ENCODE measurements at regions of chr21 and their contacts with region 1.

Region 1: GRCh38 chr21:41816220-41817165 is 49.6 kb upstream of the RIPK4 start:
- DNase-seq: peak in 9 of 10 donors; percentile 30 to 78 (median 62)
- H3K4me3 ChIP-seq: no peak overlapping the region
- H3K27ac ChIP-seq: no peak overlapping the region
- H3K27me3 ChIP-seq: no peaks in the 10 kb centered on the region
- CTCF ChIP-seq: peak; percentile 27 to 87 (median 76)

Region 2: GRCh38 chr21:41283211-41283818 is 533.2 kb before region 1 on chr21:
- intact Hi-C with region 1: loop called in 1 of 2 experiments (anchors 5 kb)
- DNase-seq: peak in 2 of 10 donors; percentile 20 to 46
- H3K4me3 ChIP-seq: no peak overlapping the region
- H3K27ac ChIP-seq: no peak overlapping the region
- H3K27me3 ChIP-seq: peaks cover 0 to 32% (median 0%) of the 10 kb centered on the region in 45 donors
- CTCF ChIP-seq: peak; percentile 43 to 88 (median 72)

Region 3: DNA sequence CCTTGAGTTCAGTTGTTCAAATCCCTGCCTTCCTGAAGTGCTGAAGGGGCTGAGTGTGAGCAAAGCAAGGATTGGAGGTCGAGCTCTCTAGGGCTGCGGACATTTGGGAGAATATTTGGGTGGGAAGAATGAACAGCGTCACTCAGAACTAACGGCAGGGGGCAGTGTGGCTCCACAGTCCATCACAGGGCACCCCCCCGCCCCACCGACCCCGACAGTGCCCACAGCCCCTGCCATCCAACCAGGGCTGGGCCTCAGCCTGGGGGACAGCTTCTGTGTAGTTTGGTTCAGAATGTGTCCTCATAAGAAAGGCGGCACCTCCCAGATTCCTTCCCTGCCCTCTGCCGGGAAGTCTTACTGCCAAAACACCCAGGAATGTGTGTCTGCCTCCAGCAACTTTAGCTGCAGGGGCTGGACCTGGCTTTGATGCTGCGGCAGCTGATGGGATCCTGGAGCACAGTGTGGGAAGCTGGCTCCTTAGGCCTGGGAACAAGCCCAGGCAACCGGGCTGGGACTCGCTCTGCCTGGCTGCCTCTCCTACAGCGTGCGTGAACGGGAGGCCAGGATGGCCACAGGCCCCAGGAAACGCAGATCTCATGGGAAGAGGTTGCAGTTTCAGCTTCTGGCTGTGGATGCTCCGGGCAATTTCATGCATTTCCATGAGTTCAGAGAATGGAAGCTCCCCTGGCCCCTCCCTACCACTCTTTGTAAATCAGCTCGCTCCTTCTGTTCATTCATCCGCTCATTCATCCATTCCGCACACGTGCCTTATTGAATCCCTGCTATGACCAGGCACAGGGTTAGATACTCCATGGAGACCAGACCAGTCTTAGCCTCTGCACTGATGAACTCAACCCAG is 203.6 kb before region 1 on chr21:
- intact Hi-C with region 1: loop called (anchors 1 to 5 kb)
- DNase-seq: peak in 9 of 10 donors; percentile 16 to 69 (median 54)
- H3K4me3 ChIP-seq: peak overlapping the region in 16 of 59 donors; percentile 0 to 39 (median 14)
- H3K27ac ChIP-seq: peak overlapping the region in 21 of 59 donors; percentile 2 to 58 (median 17)
- H3K27me3 ChIP-seq: peaks cover 0 to 9% (median 0%) of the 10 kb centered on the region in 45 donors
- CTCF ChIP-seq: peak; percentile 65 to 94 (median 84)

Region 4: DNA sequence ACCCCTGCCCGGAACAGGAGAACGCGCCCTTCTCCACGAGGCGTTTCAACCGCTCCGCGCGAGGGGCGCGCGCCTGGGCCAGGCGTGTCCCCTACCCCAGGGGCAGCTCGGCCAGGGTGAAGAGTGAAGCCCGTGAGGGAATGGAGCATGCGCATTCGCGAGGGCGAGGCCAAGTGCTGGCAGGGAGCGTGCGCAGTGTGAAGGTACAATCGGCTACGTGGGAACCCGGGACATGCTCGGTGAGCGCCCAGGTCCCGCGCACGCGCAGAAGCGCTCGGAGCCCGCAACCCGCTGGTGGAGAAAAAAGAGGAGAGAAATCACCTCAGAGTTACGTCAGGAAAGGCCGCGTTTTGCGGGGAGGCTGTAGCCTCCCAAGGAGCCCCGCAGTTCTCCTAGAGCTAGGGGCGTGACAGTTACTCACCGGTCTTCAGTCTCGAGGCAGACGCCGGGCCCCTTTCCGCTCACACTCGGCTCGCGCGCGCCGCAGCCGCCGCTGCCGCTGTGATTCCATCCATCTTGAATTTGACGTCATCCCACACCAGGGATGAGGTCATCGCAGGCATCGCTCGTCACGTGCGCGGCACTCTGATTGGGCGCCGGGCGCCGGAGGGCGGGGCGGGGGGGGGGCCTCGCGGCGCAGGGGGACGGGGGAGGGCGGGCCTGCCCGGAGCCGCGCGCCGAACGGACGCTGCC is 193.5 kb after region 1 on chr21 and contains the start of gene ZBTB21:
- intact Hi-C with region 1: loop called in 1 of 2 experiments (anchors 10 kb)
- DNase-seq: peak; percentile 94 to 98 (median 95)
- H3K4me3 ChIP-seq: peak within 1 kb of the TSS; percentile 67 to 99 (median 90)
- H3K27ac ChIP-seq: peak within 1 kb of the TSS; percentile 88 to 100 (median 99)
- H3K27me3 ChIP-seq: no peaks in the 10 kb centered on the region
- CTCF ChIP-seq: peak in 5 of 56 donors; percentile 4 to 13 (median 6)
- total RNA-seq, gene ZBTB21: 17.2 to 47.7 (median 24.6) TPM

Region 5: GRCh38 chr21:42117229-42117966 is 300.9 kb after region 1 on chr21:
- intact Hi-C with region 1: loop called (anchors 1 to 5 kb)
- DNase-seq: peak; percentile 69 to 87 (median 82)
- H3K4me3 ChIP-seq: peak overlapping the region in 38 of 59 donors; percentile 5 to 57 (median 28)
- H3K27ac ChIP-seq: peak overlapping the region in 8 of 59 donors; percentile 10 to 39 (median 27)
- H3K27me3 ChIP-seq: no peaks in the 10 kb centered on the region
- CTCF ChIP-seq: peak; percentile 92 to 99 (median 97)

Region 6: GRCh38 chr21:42449296-42449927 is 632.9 kb after region 1 on chr21:
- intact Hi-C with region 1: loop called in 1 of 2 experiments (anchors 5 kb)
- DNase-seq: no peak
- H3K4me3 ChIP-seq: no peak overlapping the region
- H3K27ac ChIP-seq: peak overlapping the region in 2 of 59 donors; percentile 2 to 15
- H3K27me3 ChIP-seq: peaks cover 0 to 4% (median 0%) of the 10 kb centered on the region in 45 donors
- CTCF ChIP-seq: no peak